ENCODE measurements at regions of chr10 and their contacts with region 1.

Region 1: GRCh38 chr10:97210543-97210961 is 24.8 kb upstream of the SLIT1 start:
- DNase-seq: peak; percentile 38 to 74 (median 54)
- ATAC-seq: peak; percentile 67
- H3K4me3 ChIP-seq: no peak overlapping the region
- H3K4me3 Mint-ChIP-seq: no peak overlapping the region
- H3K27ac ChIP-seq: no peak overlapping the region
- H3K27ac Mint-ChIP-seq: no peak overlapping the region
- H3K4me1 ChIP-seq: no peaks in the 10 kb centered on the region
- H3K4me1 Mint-ChIP-seq: no peaks in the 10 kb centered on the region
- H3K27me3 ChIP-seq: no peaks in the 10 kb centered on the region
- H3K27me3 Mint-ChIP-seq: peaks cover 0 to 2% (median 0%) of the 10 kb centered on the region in 5 donors

Region 2: DNA sequence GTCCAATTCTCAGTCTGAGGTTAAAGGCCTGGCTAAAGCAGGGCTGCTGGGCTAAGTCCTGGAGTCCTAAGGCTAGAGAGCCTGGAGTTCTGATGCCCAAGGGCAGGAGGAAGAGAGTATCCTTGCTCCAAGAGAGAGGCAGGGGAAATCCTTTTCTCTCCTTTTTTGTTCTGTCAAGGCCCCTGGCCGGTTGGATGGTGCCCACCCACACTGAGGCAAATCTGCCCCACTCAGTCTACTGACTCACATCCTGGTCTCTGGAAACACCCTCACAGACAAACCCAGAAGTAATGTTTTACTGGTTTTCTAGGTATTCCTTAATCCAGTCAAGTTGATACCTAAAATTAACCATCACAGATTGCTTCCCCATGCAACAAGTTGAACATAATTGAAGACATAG is 1057.5 kb before region 1 on chr10:
- CTCF ChIA-PET with region 1: no interaction called
- POLR2A ChIA-PET with region 1: no interaction called
- intact Hi-C with region 1: no loop called
- DNase-seq: no peak
- ATAC-seq: no peak
- H3K4me3 ChIP-seq: no peak overlapping the region
- H3K4me3 Mint-ChIP-seq: no peak overlapping the region
- H3K27ac ChIP-seq: no peak overlapping the region
- H3K27ac Mint-ChIP-seq: no peak overlapping the region
- H3K4me1 ChIP-seq: no peaks in the 10 kb centered on the region
- H3K4me1 Mint-ChIP-seq: peaks cover 0 to 8% (median 0%) of the 10 kb centered on the region in 7 donors
- H3K27me3 ChIP-seq: no peaks in the 10 kb centered on the region
- H3K27me3 Mint-ChIP-seq: no peaks in the 10 kb centered on the region

Region 3: DNA sequence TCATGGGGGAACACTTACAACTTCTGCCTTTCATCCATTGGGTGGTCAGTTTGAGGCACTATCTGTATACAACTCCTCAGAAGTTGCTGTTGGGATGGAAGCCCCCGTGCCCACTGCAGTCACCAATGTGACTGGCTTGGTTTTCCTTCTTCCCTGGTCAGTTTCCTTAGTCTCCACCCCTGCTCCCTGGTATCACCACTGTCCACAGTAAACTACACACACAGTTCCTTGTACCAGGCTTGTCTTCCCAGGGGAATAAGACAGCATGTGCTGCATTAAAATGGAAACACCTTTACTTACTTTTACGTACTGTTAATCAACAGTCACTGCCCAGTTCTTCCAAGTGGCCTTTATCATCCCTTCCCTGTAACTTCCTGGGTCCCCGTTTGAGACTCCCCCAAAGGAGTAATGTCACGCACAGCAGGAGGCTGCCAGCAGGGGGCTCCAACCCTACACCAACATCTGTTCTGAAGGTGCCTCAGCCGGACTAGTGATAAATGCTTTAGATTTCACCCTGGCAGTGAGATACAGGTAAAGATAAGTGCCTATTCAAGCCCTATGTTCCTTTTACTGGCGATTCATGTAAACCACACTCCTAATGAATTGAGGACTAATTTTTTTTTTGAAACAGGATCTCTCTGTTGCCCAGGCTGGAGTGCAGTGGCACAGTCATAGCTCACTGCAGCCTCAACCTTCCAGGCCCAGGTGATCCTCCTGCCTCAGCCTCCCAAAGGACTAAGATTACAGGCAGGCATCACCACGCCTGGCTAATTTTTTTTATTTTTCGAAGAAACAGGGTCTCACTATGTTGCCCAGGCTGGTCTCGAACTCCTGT is 444.9 kb before region 1 on chr10:
- CTCF ChIA-PET with region 1: interaction called, 6 read pairs
- POLR2A ChIA-PET with region 1: no interaction called
- intact Hi-C with region 1: loop called in 1 of 2 experiments (anchors 1 kb)
- DNase-seq: peak; percentile 39 to 71 (median 64)
- ATAC-seq: peak; percentile 92
- H3K4me3 ChIP-seq: no peak overlapping the region
- H3K4me3 Mint-ChIP-seq: no peak overlapping the region
- H3K27ac ChIP-seq: no peak overlapping the region
- H3K27ac Mint-ChIP-seq: peak overlapping the region in 1 of 9 donors; percentile 30
- H3K4me1 ChIP-seq: no peaks in the 10 kb centered on the region
- H3K4me1 Mint-ChIP-seq: peaks cover 0 to 6% (median 3%) of the 10 kb centered on the region in 7 donors
- H3K27me3 ChIP-seq: no peaks in the 10 kb centered on the region
- H3K27me3 Mint-ChIP-seq: peaks cover 0 to 4% (median 3%) of the 10 kb centered on the region in 5 donors

Region 4: DNA sequence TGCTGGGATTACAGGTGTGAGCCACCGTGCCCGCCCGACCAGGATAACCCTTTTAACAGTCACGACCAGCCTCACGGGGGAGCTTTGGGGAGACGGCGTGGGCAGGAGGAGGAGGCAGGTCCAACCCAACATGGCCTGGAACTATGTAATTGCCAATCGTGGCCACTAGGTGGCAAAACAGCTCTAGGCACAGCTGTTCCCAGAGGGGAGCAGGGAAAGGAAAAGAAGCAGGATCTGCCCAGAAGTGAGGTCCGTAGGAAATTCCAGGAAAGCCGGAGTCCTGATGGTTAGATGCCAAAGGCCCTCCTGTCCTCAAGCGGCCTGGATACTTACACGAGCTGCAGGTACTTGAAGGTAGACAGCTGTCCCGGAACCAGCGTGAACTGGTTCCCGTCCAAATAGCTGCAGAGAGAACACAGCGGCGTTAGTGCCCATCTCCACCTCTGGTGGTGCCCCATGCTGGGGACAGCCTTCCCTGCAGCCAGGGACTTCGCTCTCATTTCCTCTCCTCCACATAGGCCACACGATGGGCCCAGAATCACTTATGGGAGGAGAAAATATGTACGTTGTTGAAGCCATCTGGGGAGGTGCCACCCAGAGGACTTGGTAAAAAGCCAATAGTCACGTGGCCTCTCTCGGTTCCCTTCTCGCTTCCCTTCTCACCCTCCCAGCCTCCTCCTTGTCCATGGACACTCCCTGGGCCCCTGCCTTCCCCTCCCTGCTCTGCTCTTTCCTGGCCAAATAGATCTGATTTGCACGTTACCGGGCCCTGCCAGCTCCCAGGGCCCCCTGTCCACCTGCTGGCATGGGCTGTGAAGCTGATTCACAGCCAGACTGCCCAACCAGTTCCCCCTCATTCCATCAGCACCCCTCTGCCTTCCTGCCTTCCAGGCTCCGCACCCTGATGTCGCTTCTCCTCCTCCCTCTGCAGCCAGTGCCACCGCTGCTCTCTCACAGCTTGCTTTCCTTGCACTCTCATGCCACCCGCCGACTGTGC is 172.9 kb before region 1 on chr10:
- CTCF ChIA-PET with region 1: interaction called, 19 read pairs
- POLR2A ChIA-PET with region 1: no interaction called
- intact Hi-C with region 1: loop called (anchors 1 kb)
- DNase-seq: peak; percentile 35 to 72 (median 61)
- ATAC-seq: peak; percentile 89
- H3K4me3 ChIP-seq: peak overlapping the region; percentile 66
- H3K4me3 Mint-ChIP-seq: peak overlapping the region; percentile 64 to 85 (median 81)
- H3K27ac ChIP-seq: no peak overlapping the region
- H3K27ac Mint-ChIP-seq: peak overlapping the region in 2 of 9 donors; percentile 63 to 75
- H3K4me1 ChIP-seq: no peaks in the 10 kb centered on the region
- H3K4me1 Mint-ChIP-seq: peaks cover 12 to 20% (median 16%) of the 10 kb centered on the region in 7 donors
- H3K27me3 ChIP-seq: no peaks in the 10 kb centered on the region
- H3K27me3 Mint-ChIP-seq: peaks cover 2 to 13% (median 9%) of the 10 kb centered on the region in 5 donors

Region 5: GRCh38 chr10:97072851-97073665 is 137.5 kb before region 1 on chr10:
- CTCF ChIA-PET with region 1: interaction called, 159 read pairs
- POLR2A ChIA-PET with region 1: interaction called, 3 read pairs
- intact Hi-C with region 1: loop called in 1 of 2 experiments (anchors 1 kb)
- DNase-seq: peak; percentile 49 to 81 (median 69)
- ATAC-seq: peak; percentile 69
- H3K4me3 ChIP-seq: no peak overlapping the region
- H3K4me3 Mint-ChIP-seq: no peak overlapping the region
- H3K27ac ChIP-seq: no peak overlapping the region
- H3K27ac Mint-ChIP-seq: no peak overlapping the region
- H3K4me1 ChIP-seq: no peaks in the 10 kb centered on the region
- H3K4me1 Mint-ChIP-seq: peaks cover 0 to 12% (median 6%) of the 10 kb centered on the region in 7 donors
- H3K27me3 ChIP-seq: no peaks in the 10 kb centered on the region
- H3K27me3 Mint-ChIP-seq: peaks cover 16 to 42% (median 29%) of the 10 kb centered on the region in 5 donors

Region 6: DNA sequence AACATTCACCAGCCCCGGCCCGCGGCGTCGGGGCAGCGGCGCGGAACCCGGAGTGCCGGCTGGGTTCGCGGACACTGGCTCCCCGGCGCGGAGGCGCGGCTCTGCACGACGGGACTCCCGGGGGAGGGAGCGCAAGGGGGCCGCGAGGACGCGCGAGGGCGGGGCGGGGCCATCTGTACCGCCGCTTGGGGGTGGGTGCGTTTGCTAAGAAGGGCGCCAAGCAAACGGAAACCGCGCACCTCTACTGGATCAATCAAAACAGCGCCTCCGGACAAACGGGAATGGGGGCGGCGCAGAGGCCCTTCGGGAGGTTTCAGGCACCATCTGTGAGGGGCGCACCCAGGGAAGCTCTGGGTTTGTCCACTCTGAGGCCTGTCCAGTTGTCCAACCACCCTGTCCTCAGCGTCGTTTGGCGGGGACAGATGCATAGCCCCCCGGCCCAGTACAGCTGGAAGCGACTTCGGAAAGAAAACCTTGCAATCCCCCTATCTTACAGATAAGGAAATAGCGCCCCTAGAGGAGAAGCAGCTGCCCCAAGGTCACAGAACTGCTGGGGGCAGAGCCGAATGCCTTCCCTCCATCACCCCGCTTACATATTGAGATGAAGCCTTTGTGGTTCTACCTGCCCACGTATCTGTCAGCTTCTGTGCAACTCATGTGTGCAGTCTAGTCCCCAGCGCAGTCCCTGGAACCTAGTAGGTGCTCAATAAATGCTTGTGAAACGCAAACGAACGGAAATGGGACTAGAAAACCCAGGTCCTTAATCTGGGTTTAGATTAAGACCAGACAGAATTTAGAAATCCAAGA is 14.1 kb before region 1 on chr10:
- CTCF ChIA-PET with region 1: interaction called, 30 read pairs
- POLR2A ChIA-PET with region 1: no interaction called
- intact Hi-C with region 1: loop called in 1 of 2 experiments (anchors 1 kb)
- DNase-seq: peak; percentile 32 to 73 (median 66)
- ATAC-seq: peak; percentile 91
- H3K4me3 ChIP-seq: peak overlapping the region; percentile 83
- H3K4me3 Mint-ChIP-seq: peak overlapping the region; percentile 83 to 94 (median 87)
- H3K27ac ChIP-seq: peak overlapping the region; percentile 17
- H3K27ac Mint-ChIP-seq: peak overlapping the region in 1 of 9 donors; percentile 30
- H3K4me1 ChIP-seq: peaks cover 6% of the 10 kb centered on the region in 2 donors
- H3K4me1 Mint-ChIP-seq: peaks cover 0 to 14% (median 6%) of the 10 kb centered on the region in 7 donors
- H3K27me3 ChIP-seq: peaks cover 2 to 4% of the 10 kb centered on the region in 2 donors
- H3K27me3 Mint-ChIP-seq: peaks cover 19 to 76% (median 27%) of the 10 kb centered on the region in 5 donors

Region 7: GRCh38 chr10:97222326-97222961 is 11.9 kb after region 1 on chr10:
- CTCF ChIA-PET with region 1: interaction called, 24 read pairs
- POLR2A ChIA-PET with region 1: no interaction called
- intact Hi-C with region 1: no loop called
- DNase-seq: no peak
- ATAC-seq: no peak
- H3K4me3 ChIP-seq: no peak overlapping the region
- H3K4me3 Mint-ChIP-seq: no peak overlapping the region
- H3K27ac ChIP-seq: no peak overlapping the region
- H3K27ac Mint-ChIP-seq: no peak overlapping the region
- H3K4me1 ChIP-seq: no peaks in the 10 kb centered on the region
- H3K4me1 Mint-ChIP-seq: peaks cover 0 to 27% (median 4%) of the 10 kb centered on the region in 7 donors
- H3K27me3 ChIP-seq: no peaks in the 10 kb centered on the region
- H3K27me3 Mint-ChIP-seq: no peaks in the 10 kb centered on the region

Measured in naive thymus-derived CD4-positive, alpha-beta T cell (primary cell).